ENCODE measurements at regions of chr13 and their contacts with region 1.

Region 1: GRCh38 chr13:77480066-77480465 is 55.4 kb upstream of the SCEL start:
- DNase-seq: no peak
- ATAC-seq: no peak
- H3K4me3 ChIP-seq: no peak overlapping the region
- H3K27ac ChIP-seq: no peak overlapping the region
- H3K4me1 ChIP-seq: peaks cover 6% of the 10 kb centered on the region
- H3K27me3 ChIP-seq: no peaks in the 10 kb centered on the region
- CTCF ChIP-seq: no peak
- EP300 ChIP-seq: no peak
- POLR2A ChIP-seq: no peak
- RAD21 ChIP-seq: no peak

Region 2: DNA sequence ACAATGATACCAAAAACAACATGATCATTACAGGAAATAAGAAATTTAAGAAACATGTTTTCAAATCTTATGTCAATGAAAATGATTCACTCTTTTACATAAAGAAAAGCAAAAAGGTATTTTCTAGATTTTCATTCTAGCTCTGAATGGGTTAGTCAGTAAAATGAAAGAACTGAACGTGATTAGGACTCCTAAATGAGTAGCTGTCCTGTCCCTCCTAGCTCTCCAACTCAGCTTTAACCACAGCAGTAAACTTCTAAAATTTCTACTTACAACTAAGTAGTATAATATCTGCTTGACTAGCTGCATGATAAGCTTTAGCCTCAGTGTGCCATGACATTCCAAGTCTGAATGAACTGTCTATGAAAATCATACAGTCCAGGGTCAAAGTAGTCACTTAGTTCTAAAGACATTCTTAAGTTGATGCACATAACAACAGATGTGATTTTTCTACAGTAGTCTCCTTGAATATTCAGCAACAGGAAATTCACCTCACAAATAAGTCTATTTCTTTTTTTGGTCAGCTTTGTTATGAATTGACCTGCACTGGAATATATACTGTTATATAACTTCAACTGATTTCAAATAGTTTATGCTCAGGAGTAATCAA is 289.6 kb before region 1 on chr13:
- CTCF ChIA-PET with region 1: interaction called, 10 read pairs
- POLR2A ChIA-PET with region 1: interaction called, 3 read pairs
- RAD21 ChIA-PET with region 1: interaction called, 5 read pairs
- SMC1A ChIA-PET with region 1: interaction called, 15 read pairs
- in situ Hi-C with region 1: no loop called
- intact Hi-C with region 1: no loop called
- DNase-seq: no peak
- ATAC-seq: no peak
- H3K4me3 ChIP-seq: no peak overlapping the region
- H3K27ac ChIP-seq: no peak overlapping the region
- H3K4me1 ChIP-seq: no peaks in the 10 kb centered on the region
- H3K27me3 ChIP-seq: no peaks in the 10 kb centered on the region
- CTCF ChIP-seq: no peak
- EP300 ChIP-seq: no peak
- POLR2A ChIP-seq: no peak
- RAD21 ChIP-seq: no peak

Region 3: GRCh38 chr13:77274126-77274525 is 205.9 kb before region 1 on chr13:
- CTCF ChIA-PET with region 1: interaction called, 20 read pairs
- POLR2A ChIA-PET with region 1: no interaction called
- RAD21 ChIA-PET with region 1: interaction called, 19 read pairs
- SMC1A ChIA-PET with region 1: interaction called, 31 read pairs
- in situ Hi-C with region 1: no loop called
- intact Hi-C with region 1: loop called (anchors 1 kb)
- DNase-seq: no peak
- ATAC-seq: no peak
- H3K4me3 ChIP-seq: no peak overlapping the region
- H3K27ac ChIP-seq: no peak overlapping the region
- H3K4me1 ChIP-seq: no peaks in the 10 kb centered on the region
- H3K27me3 ChIP-seq: no peaks in the 10 kb centered on the region
- CTCF ChIP-seq: no peak; a peak in 1 of 6 replicates
- EP300 ChIP-seq: no peak
- POLR2A ChIP-seq: no peak
- RAD21 ChIP-seq: 0 out of 2 replicates have a peak, but pooled peaks have one; percentile 24

Region 4: GRCh38 chr13:77318741-77319140 is 161.3 kb before region 1 on chr13:
- CTCF ChIA-PET with region 1: interaction called, 80 read pairs
- POLR2A ChIA-PET with region 1: interaction called, 4 read pairs
- RAD21 ChIA-PET with region 1: interaction called, 53 read pairs
- SMC1A ChIA-PET with region 1: interaction called, 113 read pairs
- in situ Hi-C with region 1: no loop called
- intact Hi-C with region 1: no loop called
- DNase-seq: no peak
- ATAC-seq: no peak; the same call in 2 of the 3 replicates
- H3K4me3 ChIP-seq: no peak overlapping the region
- H3K27ac ChIP-seq: no peak overlapping the region
- H3K4me1 ChIP-seq: 0 out of 2 replicates have a peak, but pooled peaks cover 3% of the 10 kb centered on the region
- H3K27me3 ChIP-seq: no peaks in the 10 kb centered on the region
- CTCF ChIP-seq: no peak
- EP300 ChIP-seq: no peak
- POLR2A ChIP-seq: no peak
- RAD21 ChIP-seq: no peak

Region 5: GRCh38 chr13:77389625-77390000 is 90.5 kb before region 1 on chr13:
- CTCF ChIA-PET with region 1: interaction called, 15 read pairs
- POLR2A ChIA-PET with region 1: no interaction called
- RAD21 ChIA-PET with region 1: interaction called, 6 read pairs
- SMC1A ChIA-PET with region 1: interaction called, 9 read pairs
- in situ Hi-C with region 1: no loop called
- intact Hi-C with region 1: no loop called
- DNase-seq: peak; percentile 23
- ATAC-seq: peak; percentile 89
- H3K4me3 ChIP-seq: no peak overlapping the region
- H3K27ac ChIP-seq: no peak overlapping the region
- H3K4me1 ChIP-seq: peaks cover 9% of the 10 kb centered on the region; the same call in 1 of the 2 replicates
- H3K27me3 ChIP-seq: no peaks in the 10 kb centered on the region
- CTCF ChIP-seq: no peak
- EP300 ChIP-seq: peak; percentile 55 to 87; a peak in 3 of 4 replicates
- POLR2A ChIP-seq: no peak
- RAD21 ChIP-seq: no peak

Region 6: DNA sequence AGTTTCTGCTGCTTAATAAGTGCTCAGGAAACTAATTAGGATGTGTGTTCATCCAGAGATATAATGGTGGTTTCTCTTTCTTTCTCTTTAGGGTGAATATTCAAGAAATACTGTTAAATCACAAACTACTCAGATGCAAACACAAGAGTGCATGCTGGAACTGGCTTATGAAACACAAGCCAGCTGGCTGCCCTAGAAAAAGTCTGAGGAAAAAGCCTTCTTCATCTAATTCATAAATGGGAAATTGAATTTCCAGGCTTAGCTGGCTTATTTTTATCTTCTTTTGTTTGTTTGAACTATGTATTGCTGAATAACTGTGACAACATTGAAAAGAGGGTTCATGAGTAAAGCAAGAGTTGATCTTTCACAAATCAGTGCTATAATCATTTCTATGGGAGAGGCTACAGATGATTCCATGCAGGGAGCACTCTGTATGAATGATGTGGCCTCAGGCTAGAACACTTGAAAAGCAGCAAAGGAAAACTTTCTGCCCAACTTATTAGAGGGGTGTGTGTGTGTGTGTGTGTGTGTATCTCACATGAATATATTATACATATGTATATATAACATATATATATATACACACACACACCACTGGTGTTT is 14.4 kb before region 1 on chr13:
- CTCF ChIA-PET with region 1: interaction called, 18 read pairs
- POLR2A ChIA-PET with region 1: no interaction called
- RAD21 ChIA-PET with region 1: interaction called, 9 read pairs
- SMC1A ChIA-PET with region 1: interaction called, 35 read pairs
- in situ Hi-C with region 1: no loop called
- intact Hi-C with region 1: no loop called
- DNase-seq: no peak
- ATAC-seq: no peak
- H3K4me3 ChIP-seq: no peak overlapping the region
- H3K27ac ChIP-seq: no peak overlapping the region
- H3K4me1 ChIP-seq: no peaks in the 10 kb centered on the region
- H3K27me3 ChIP-seq: no peaks in the 10 kb centered on the region
- CTCF ChIP-seq: no peak
- EP300 ChIP-seq: no peak
- POLR2A ChIP-seq: no peak
- RAD21 ChIP-seq: no peak

Region 7: DNA sequence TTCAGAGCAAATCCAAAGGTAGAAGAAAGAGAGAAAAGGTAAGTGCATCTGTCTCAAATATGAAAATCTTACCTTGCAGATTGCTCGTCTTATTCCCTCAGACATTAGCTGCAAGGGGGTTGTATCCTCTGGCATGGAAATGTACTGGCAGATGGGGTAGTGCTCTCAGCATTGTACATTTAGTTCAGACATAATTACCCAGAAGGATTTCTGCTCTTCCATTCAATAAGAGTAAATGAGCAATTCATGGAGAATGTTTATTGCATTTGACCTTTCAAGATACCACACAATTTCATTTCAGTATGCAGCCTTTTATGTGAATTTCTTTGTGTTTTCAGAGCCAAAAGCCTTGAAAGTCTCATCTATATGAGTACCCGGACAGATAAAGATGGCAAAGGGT is 119.3 kb after region 1 on chr13:
- CTCF ChIA-PET with region 1: no interaction called
- POLR2A ChIA-PET with region 1: no interaction called
- RAD21 ChIA-PET with region 1: no interaction called
- SMC1A ChIA-PET with region 1: no interaction called
- in situ Hi-C with region 1: no loop called
- intact Hi-C with region 1: no loop called
- DNase-seq: no peak
- ATAC-seq: no peak
- H3K4me3 ChIP-seq: no peak overlapping the region
- H3K27ac ChIP-seq: no peak overlapping the region
- H3K4me1 ChIP-seq: no peaks in the 10 kb centered on the region
- H3K27me3 ChIP-seq: peaks cover 0 to 7% of the 10 kb centered on the region in 2 experiments; a peak in 2 of 4 replicates
- CTCF ChIP-seq: no peak
- EP300 ChIP-seq: no peak
- POLR2A ChIP-seq: no peak
- RAD21 ChIP-seq: no peak

Region 8: DNA sequence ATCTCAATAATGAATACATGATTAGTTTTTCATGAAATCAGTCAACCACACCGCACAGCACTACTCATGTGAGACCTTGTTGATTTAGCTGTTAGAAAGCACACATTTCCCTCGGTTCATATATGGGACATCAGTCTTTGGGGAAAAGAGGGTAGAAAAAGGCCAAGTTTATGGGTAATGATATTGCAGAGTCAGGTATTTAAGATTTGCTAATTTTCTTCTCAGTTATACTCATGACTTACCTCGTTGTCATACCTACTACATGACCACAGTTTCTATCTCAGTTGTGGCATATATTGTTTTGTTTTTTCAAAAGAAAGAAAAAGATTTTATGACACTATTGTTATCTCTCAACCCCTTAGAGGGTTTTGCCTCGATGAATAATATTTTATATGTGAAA is 957.7 kb after region 1 on chr13:
- CTCF ChIA-PET with region 1: no interaction called
- POLR2A ChIA-PET with region 1: no interaction called
- RAD21 ChIA-PET with region 1: no interaction called
- SMC1A ChIA-PET with region 1: no interaction called
- in situ Hi-C with region 1: no loop called
- intact Hi-C with region 1: no loop called
- DNase-seq: no peak
- ATAC-seq: no peak; the same call in 2 of the 3 replicates
- H3K4me3 ChIP-seq: no peak overlapping the region
- H3K27ac ChIP-seq: no peak overlapping the region
- H3K4me1 ChIP-seq: no peaks in the 10 kb centered on the region
- H3K27me3 ChIP-seq: no peaks in the 10 kb centered on the region
- CTCF ChIP-seq: no peak
- EP300 ChIP-seq: no peak
- POLR2A ChIP-seq: no peak
- RAD21 ChIP-seq: no peak

Measured in GM12878 (cell line).